T-cell (primary cell): ENCODE measurements at regions of chr10 and their contacts with region 1.

Region 1: DNA sequence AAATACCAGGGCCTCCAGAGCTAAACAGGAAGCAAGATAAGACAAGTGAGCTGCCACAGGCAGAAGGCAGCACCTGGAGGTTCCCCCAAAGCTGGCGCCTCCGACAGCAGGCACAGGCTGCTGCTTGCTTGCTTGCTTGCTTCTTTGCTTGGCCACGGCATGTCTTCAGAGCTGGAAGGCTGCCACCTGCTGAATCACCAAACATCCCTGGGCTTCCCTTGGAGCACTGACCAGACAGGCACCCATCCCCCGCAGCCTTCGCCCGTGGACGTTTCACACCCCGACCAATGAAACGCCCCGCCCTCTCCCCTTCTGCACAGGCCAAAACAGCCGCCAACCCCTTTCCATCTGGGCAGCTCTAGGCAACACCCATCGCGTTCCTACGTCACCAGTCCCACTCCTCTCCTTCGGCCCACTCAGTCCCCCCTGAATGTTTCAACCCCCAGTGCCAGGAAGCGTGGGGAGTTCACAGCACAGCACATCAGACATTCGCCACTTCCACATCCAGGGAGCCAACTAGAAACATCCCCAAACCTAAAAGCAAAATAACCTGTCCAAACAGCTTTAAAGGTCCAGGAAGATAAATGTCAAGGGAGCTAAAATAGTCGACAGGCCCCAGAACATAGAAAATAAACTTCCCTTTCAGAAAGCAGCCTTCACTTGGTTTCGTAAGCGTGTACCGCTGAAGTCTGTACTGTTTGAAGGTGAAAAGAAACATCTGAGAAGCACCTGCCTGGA is 1.6 kb downstream of the SGMS1 start:
- DNase-seq: peak; percentile 42 to 78 (median 66)
- ATAC-seq: peak; percentile 32 to 52 (median 34)
- H3K4me3 ChIP-seq: peak overlapping the region; percentile 90 to 93
- H3K4me3 Mint-ChIP-seq: peak overlapping the region; percentile 92 to 99 (median 99)
- H3K27ac ChIP-seq: peak overlapping the region; percentile 79
- H3K27ac Mint-ChIP-seq: peak overlapping the region; percentile 95 to 98
- H3K4me1 ChIP-seq: peaks cover 40 to 50% of the 10 kb centered on the region in 2 experiments
- H3K4me1 Mint-ChIP-seq: peaks cover 49 to 59% (median 54%) of the 10 kb centered on the region in 3 donors
- H3K27me3 ChIP-seq: no peaks in the 10 kb centered on the region
- H3K27me3 Mint-ChIP-seq: no peaks in the 10 kb centered on the region

Region 2: DNA sequence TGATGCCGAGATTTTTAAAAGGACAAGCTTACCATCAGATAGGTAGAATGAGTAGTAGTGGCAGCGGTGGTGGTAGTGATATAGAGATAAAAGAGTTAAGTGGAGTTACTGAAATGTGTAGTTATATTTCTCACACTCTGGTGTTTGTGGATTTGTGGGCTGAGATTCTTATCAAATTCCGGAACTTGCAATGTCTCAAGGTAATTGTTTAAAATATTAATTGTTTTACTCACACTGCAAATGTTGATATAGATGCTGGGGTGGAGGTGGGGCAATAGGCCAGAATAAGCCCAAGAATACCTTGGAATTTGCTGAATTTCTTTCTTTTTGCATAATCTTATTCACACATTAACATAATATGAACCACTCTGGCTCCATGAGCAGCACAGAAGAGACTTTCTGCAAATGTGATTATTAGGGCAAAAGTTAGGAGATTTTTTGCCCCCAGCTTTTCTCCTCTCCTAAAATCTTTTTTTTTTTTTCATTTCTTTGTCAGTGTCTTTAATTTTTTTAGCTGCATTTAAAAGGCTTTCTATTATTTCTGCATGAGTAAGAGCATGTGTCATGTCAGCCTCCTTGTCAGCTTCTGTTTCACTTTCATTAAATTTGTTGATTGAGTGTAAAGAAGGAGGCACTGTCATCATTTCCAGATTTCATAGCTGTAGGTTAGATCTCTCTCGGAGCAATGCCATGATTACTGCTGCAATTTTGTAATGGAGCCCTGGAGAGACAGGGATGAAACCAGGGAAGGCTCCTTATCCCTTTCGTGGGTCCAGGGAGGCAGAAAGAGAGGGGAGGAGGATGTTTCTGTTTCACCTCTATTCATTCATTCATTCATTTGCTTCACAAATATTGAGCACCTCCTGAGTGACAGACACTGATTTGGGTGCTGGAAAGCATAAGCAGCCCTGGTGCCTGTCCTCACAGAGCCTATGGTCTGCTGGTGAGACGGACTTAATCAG is 14.8 kb after region 1 on chr10:
- CTCF ChIA-PET with region 1: interaction called, 4 to 17 read pairs
- POLR2A ChIA-PET with region 1: interaction called in 1 of 2 experiments, 4 read pairs
- DNase-seq: peak in 5 of 35 experiments; percentile 15 to 64 (median 31)
- ATAC-seq: peak; percentile 75 to 84 (median 78)
- H3K4me3 ChIP-seq: peak overlapping the region in 1 of 2 donors; percentile 13
- H3K4me3 Mint-ChIP-seq: peak overlapping the region; percentile 45 to 63 (median 57)
- H3K27ac ChIP-seq: no peak overlapping the region
- H3K27ac Mint-ChIP-seq: peak overlapping the region; percentile 81 to 89
- H3K4me1 ChIP-seq: peaks cover 15 to 22% of the 10 kb centered on the region in 2 experiments
- H3K4me1 Mint-ChIP-seq: peaks cover 35 to 42% (median 39%) of the 10 kb centered on the region in 3 donors
- H3K27me3 ChIP-seq: no peaks in the 10 kb centered on the region
- H3K27me3 Mint-ChIP-seq: peaks cover 0 to 3% of the 10 kb centered on the region in 2 donors

Region 3: GRCh38 chr10:51301644-51302043 is 679.5 kb after region 1 on chr10:
- CTCF ChIA-PET with region 1: no interaction called
- POLR2A ChIA-PET with region 1: no interaction called
- DNase-seq: no peak
- ATAC-seq: no peak
- H3K4me3 ChIP-seq: no peak overlapping the region
- H3K4me3 Mint-ChIP-seq: no peak overlapping the region
- H3K27ac ChIP-seq: no peak overlapping the region
- H3K27ac Mint-ChIP-seq: no peak overlapping the region
- H3K4me1 ChIP-seq: no peaks in the 10 kb centered on the region
- H3K4me1 Mint-ChIP-seq: no peaks in the 10 kb centered on the region
- H3K27me3 ChIP-seq: no peaks in the 10 kb centered on the region
- H3K27me3 Mint-ChIP-seq: no peaks in the 10 kb centered on the region

Region 4: GRCh38 chr10:52066383-52066782 is 1444.2 kb after region 1 on chr10:
- CTCF ChIA-PET with region 1: no interaction called
- POLR2A ChIA-PET with region 1: no interaction called
- DNase-seq: no peak
- ATAC-seq: no peak
- H3K4me3 ChIP-seq: no peak overlapping the region
- H3K4me3 Mint-ChIP-seq: no peak overlapping the region
- H3K27ac ChIP-seq: no peak overlapping the region
- H3K27ac Mint-ChIP-seq: no peak overlapping the region
- H3K4me1 ChIP-seq: no peaks in the 10 kb centered on the region
- H3K4me1 Mint-ChIP-seq: no peaks in the 10 kb centered on the region
- H3K27me3 ChIP-seq: no peaks in the 10 kb centered on the region
- H3K27me3 Mint-ChIP-seq: no peaks in the 10 kb centered on the region